CD4-positive, alpha-beta memory T cell (primary cell): ENCODE measurements at regions of chr22 and their contacts with region 1.

Region 1: GRCh38 chr22:31272522-31273446 is 19.5 kb downstream of the PIK3IP1 start:
- DNase-seq: peak in 3 of 5 donors; percentile 44 to 56 (median 51)
- H3K4me3 ChIP-seq: no peak overlapping the region
- H3K4me3 Mint-ChIP-seq: peak overlapping the region in 1 of 8 donors; percentile 2
- H3K27ac ChIP-seq: no peak overlapping the region
- H3K27ac Mint-ChIP-seq: peak overlapping the region; percentile 61 to 84 (median 73)
- H3K4me1 ChIP-seq: peaks cover 52% of the 10 kb centered on the region
- H3K4me1 Mint-ChIP-seq: peaks cover 30 to 77% (median 51%) of the 10 kb centered on the region in 4 donors
- H3K27me3 ChIP-seq: no peaks in the 10 kb centered on the region
- H3K27me3 Mint-ChIP-seq: no peaks in the 10 kb centered on the region

Region 2: GRCh38 chr22:31089160-31090100 is 183.4 kb before region 1 on chr22:
- CTCF ChIA-PET with region 1: interaction called, 9 read pairs
- POLR2A ChIA-PET with region 1: interaction called, 19 read pairs
- intact Hi-C with region 1: loop called (anchors 2 kb)
- DNase-seq: peak; percentile 30 to 39 (median 32)
- H3K4me3 ChIP-seq: no peak overlapping the region
- H3K4me3 Mint-ChIP-seq: no peak overlapping the region
- H3K27ac ChIP-seq: no peak overlapping the region
- H3K27ac Mint-ChIP-seq: peak overlapping the region in 2 of 7 donors; percentile 41 to 70
- H3K4me1 ChIP-seq: peaks cover 5% of the 10 kb centered on the region
- H3K4me1 Mint-ChIP-seq: peaks cover under 1 to 2% (median 1%) of the 10 kb centered on the region in 4 donors
- H3K27me3 ChIP-seq: no peaks in the 10 kb centered on the region
- H3K27me3 Mint-ChIP-seq: no peaks in the 10 kb centered on the region

Region 3: DNA sequence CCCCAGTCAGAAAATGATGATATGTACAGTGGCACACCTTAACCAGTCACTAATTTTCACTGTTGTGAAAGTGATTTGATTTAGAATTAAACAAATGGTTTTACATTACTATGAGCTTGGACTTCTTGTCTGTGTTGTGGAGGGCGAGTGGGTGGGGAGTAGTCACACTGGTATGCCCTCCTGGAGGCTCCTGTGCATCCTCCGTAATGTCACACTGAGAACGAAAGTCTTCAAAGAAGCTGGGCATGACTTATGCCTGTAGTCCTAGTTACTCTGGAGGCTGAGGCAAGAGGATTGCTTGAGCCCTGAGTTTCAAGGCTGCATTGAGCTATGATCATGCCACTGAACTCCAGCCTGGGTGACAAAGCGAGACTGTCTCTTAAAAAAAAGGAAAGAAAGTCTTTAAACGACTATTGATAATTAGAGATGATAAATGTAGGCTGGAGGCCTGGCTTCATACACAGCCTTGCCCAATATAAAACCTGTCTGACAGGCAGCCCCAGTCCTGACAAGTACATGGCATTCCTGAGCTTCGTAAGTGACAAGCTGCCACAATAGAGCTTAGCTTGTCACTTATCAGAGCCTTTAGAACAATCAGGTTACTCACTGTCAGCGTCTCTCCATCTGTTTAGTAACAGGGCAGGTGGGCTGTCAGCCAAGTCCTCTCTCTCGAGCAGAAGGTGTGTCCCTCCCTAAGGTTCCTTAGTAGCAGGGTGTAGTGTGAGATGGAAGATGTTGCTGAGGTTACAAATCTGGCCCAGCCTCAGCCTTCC is 65.7 kb before region 1 on chr22:
- CTCF ChIA-PET with region 1: interaction called, 113 read pairs
- POLR2A ChIA-PET with region 1: interaction called, 86 read pairs
- intact Hi-C with region 1: loop called (anchors 1 kb)
- DNase-seq: no peak
- H3K4me3 ChIP-seq: no peak overlapping the region
- H3K4me3 Mint-ChIP-seq: no peak overlapping the region
- H3K27ac ChIP-seq: no peak overlapping the region
- H3K27ac Mint-ChIP-seq: peak overlapping the region; percentile 46 to 84 (median 73)
- H3K4me1 ChIP-seq: peaks cover 23% of the 10 kb centered on the region
- H3K4me1 Mint-ChIP-seq: peaks cover 24 to 31% (median 25%) of the 10 kb centered on the region in 4 donors
- H3K27me3 ChIP-seq: no peaks in the 10 kb centered on the region
- H3K27me3 Mint-ChIP-seq: no peaks in the 10 kb centered on the region

Region 4: GRCh38 chr22:31223786-31224191 is 49.0 kb before region 1 on chr22:
- CTCF ChIA-PET with region 1: interaction called, 32 read pairs
- POLR2A ChIA-PET with region 1: no interaction called
- intact Hi-C with region 1: no loop called
- DNase-seq: no peak
- H3K4me3 ChIP-seq: no peak overlapping the region
- H3K4me3 Mint-ChIP-seq: no peak overlapping the region
- H3K27ac ChIP-seq: no peak overlapping the region
- H3K27ac Mint-ChIP-seq: peak overlapping the region; percentile 54 to 88 (median 76)
- H3K4me1 ChIP-seq: peaks cover 16% of the 10 kb centered on the region
- H3K4me1 Mint-ChIP-seq: peaks cover 23 to 62% (median 44%) of the 10 kb centered on the region in 4 donors
- H3K27me3 ChIP-seq: no peaks in the 10 kb centered on the region
- H3K27me3 Mint-ChIP-seq: no peaks in the 10 kb centered on the region

Region 5: GRCh38 chr22:31253949-31254348 is 18.8 kb before region 1 on chr22:
- CTCF ChIA-PET with region 1: interaction called, 71 read pairs
- POLR2A ChIA-PET with region 1: interaction called, 26 read pairs
- intact Hi-C with region 1: no loop called
- DNase-seq: no peak
- H3K4me3 ChIP-seq: no peak overlapping the region
- H3K4me3 Mint-ChIP-seq: no peak overlapping the region
- H3K27ac ChIP-seq: no peak overlapping the region
- H3K27ac Mint-ChIP-seq: no peak overlapping the region
- H3K4me1 ChIP-seq: peaks cover 2% of the 10 kb centered on the region
- H3K4me1 Mint-ChIP-seq: peaks cover 7 to 12% (median 11%) of the 10 kb centered on the region in 4 donors
- H3K27me3 ChIP-seq: no peaks in the 10 kb centered on the region
- H3K27me3 Mint-ChIP-seq: no peaks in the 10 kb centered on the region

Region 6: DNA sequence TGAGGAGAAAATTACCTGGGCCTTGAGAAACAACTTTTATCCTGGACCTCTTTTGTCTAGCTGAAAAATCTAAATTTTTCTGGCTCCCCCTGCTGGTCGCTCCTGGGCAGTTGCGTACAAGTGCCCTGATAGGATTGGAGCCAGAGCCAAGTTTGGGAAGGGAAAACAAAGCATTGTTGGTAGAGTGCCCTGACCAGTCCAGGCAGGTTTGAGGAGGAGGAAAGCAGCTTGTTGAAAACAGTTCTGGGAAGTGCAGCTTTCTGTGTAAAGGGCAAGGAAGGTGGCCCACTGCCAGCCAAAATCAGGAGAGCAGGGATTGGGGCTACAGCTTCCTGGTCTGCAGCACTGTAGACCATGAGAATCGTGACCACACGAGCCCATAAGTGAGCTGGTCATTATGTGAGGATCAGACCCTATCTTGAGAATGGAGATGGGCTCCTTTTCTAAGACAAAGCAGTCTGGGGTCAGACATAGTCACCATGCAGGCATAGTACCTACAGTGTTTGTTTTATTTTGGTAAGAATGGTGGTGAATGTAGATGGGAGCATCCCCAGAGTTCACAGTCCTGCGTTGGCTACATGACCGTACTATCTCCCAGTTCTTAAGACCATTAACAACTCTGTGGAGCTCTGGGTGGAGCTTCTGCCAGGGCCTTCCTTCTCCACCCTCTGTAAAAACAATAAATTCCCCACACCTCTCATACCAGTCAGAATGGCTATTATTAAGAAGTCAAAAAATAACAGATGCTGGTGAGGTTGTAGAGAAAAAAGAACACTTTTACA is 40.8 kb after region 1 on chr22:
- CTCF ChIA-PET with region 1: interaction called, 114 read pairs
- POLR2A ChIA-PET with region 1: interaction called, 33 read pairs
- intact Hi-C with region 1: no loop called
- DNase-seq: peak; percentile 58 to 68 (median 60)
- H3K4me3 ChIP-seq: no peak overlapping the region
- H3K4me3 Mint-ChIP-seq: peak overlapping the region in 1 of 8 donors; percentile 10
- H3K27ac ChIP-seq: no peak overlapping the region
- H3K27ac Mint-ChIP-seq: peak overlapping the region in 5 of 7 donors; percentile 37 to 91 (median 78)
- H3K4me1 ChIP-seq: peaks cover 25% of the 10 kb centered on the region
- H3K4me1 Mint-ChIP-seq: peaks cover 6 to 20% (median 14%) of the 10 kb centered on the region in 4 donors
- H3K27me3 ChIP-seq: no peaks in the 10 kb centered on the region
- H3K27me3 Mint-ChIP-seq: no peaks in the 10 kb centered on the region